ENCODE measurements at regions of chr19 and their contacts with region 1.

Region 1: DNA sequence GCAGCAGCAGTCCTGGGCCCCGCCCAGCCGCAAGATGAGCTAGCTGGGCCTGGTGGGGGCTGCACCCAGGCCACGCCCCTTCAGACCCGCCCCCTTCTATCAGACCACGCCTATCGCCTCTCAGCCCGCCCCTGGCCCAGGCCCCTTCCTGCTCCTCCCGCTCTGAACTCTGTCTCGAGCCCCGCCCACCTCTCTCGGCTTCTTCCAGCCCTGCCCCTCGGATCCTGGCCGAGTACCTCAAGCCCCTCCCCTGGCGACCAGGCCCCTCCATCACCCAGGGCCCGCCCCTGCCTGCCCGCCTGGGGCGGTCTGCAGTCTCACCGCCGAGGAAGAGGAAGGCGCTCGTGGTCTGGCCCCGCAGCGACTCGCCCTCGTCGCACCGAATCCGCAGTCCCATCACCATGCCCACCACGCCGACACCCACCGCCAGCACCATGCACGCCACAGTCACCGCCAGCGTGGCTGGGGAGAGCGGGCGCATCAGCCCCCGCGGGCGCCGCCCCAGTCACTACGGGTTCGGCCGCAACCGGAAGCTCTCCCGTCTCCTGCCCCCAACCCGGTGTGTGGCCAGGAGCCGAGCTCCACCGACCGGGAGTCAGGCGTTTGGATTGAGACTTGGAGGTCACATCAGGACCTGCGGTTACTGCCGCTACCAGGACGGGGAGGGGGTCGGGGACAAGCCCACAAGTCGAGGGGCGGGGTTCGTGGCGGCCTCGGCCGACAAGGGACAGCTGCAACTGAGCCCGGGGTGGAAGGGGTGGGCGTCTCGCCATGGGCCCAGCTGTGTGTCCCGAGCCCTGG is 1.0 kb downstream of the CLDND2 start:
- DNase-seq: peak; percentile 98
- ATAC-seq: peak; percentile 85
- H3K4me3 ChIP-seq: peak overlapping the region; percentile 73 to 94 (median 78)
- H3K4me3 Mint-ChIP-seq: peak overlapping the region; percentile 97
- H3K27ac ChIP-seq: peak overlapping the region; percentile 80 to 87
- H3K27ac Mint-ChIP-seq: peak overlapping the region; percentile 95
- H3K4me1 ChIP-seq: peaks cover 5 to 36% of the 10 kb centered on the region in 2 donors
- H3K4me1 Mint-ChIP-seq: peaks cover 37% of the 10 kb centered on the region
- H3K27me3 ChIP-seq: no peaks in the 10 kb centered on the region
- H3K27me3 Mint-ChIP-seq: no peaks in the 10 kb centered on the region
- CTCF ChIP-seq: no peak

Region 2: GRCh38 chr19:51325161-51325976 is 42.4 kb before region 1 on chr19:
- CTCF ChIA-PET with region 1: no interaction called
- POLR2A ChIA-PET with region 1: no interaction called
- intact Hi-C with region 1: no loop called
- DNase-seq: no peak
- ATAC-seq: no peak
- H3K4me3 ChIP-seq: no peak overlapping the region
- H3K4me3 Mint-ChIP-seq: no peak overlapping the region
- H3K27ac ChIP-seq: no peak overlapping the region
- H3K27ac Mint-ChIP-seq: no peak overlapping the region
- H3K4me1 ChIP-seq: peaks cover 12 to 20% of the 10 kb centered on the region in 2 donors
- H3K4me1 Mint-ChIP-seq: peaks cover 11% of the 10 kb centered on the region
- H3K27me3 ChIP-seq: peaks cover 0 to 51% (median 27%) of the 10 kb centered on the region in 4 experiments
- H3K27me3 Mint-ChIP-seq: peaks cover 67% of the 10 kb centered on the region
- CTCF ChIP-seq: no peak

Region 3: DNA sequence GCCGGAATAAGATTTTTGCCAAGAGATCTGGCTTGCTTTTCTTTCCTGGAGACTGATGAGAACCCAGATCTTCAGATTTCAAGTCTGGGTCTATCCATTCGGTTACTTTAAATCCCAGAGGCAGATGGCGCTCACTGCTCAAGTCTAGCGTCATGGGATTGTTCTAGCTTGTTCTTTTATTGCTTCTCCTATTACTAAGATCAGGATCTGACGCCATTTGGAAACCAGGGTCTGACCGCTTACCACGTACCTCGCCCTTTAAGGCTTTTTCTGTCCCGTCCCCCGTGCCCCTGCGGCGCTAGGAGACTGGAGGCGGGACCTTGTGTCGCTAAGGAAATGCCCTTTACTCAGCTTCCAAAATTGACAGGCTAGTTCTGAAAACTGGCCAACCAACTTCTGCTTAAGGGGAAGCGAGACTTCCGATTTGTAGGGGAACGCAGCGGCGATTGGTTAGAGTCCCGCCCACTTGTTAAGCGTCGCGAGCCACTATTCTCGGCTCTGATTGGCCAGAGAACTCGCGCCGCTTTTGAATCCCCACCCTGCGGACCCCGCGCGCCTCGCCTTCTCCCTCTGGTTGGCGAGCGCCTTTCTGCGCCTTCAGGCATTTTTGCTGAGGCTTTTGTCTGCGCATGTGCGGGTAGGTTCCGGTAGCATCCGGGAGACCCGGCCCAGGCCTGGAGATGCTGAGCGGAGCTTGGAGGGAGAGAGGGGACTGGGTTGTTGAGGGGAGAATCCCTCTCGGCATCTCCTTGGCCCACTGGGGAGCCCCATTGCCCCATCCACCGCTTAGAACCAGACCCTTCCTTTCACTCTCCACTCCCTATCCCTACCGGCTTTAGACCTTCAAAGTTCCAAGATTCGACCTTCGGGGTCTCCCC is 26.4 kb after region 1 on chr19:
- CTCF ChIA-PET with region 1: interaction called, 5 read pairs
- POLR2A ChIA-PET with region 1: interaction called, 8 read pairs
- intact Hi-C with region 1: loop called (anchors 1 kb)
- DNase-seq: peak; percentile 95
- ATAC-seq: peak; percentile 92
- H3K4me3 ChIP-seq: peak overlapping the region; percentile 43 to 74 (median 62)
- H3K4me3 Mint-ChIP-seq: peak overlapping the region; percentile 85
- H3K27ac ChIP-seq: peak overlapping the region; percentile 63 to 73
- H3K27ac Mint-ChIP-seq: peak overlapping the region; percentile 78
- H3K4me1 ChIP-seq: peaks cover 22 to 33% of the 10 kb centered on the region in 2 donors
- H3K4me1 Mint-ChIP-seq: peaks cover 30% of the 10 kb centered on the region
- H3K27me3 ChIP-seq: peaks cover 0 to 4% (median 0%) of the 10 kb centered on the region in 4 experiments
- H3K27me3 Mint-ChIP-seq: no peaks in the 10 kb centered on the region
- CTCF ChIP-seq: peak; percentile 13

Region 4: GRCh38 chr19:51441410-51442390 is 73.9 kb after region 1 on chr19:
- CTCF ChIA-PET with region 1: interaction called, 7 read pairs
- POLR2A ChIA-PET with region 1: no interaction called
- intact Hi-C with region 1: loop called (anchors 1 kb)
- DNase-seq: peak; percentile 88
- ATAC-seq: peak; percentile 89
- H3K4me3 ChIP-seq: peak overlapping the region; percentile 5 to 41 (median 37)
- H3K4me3 Mint-ChIP-seq: peak overlapping the region; percentile 71
- H3K27ac ChIP-seq: peak overlapping the region; percentile 61 to 71
- H3K27ac Mint-ChIP-seq: peak overlapping the region; percentile 83
- H3K4me1 ChIP-seq: peaks cover 20 to 32% of the 10 kb centered on the region in 2 donors
- H3K4me1 Mint-ChIP-seq: peaks cover 32% of the 10 kb centered on the region
- H3K27me3 ChIP-seq: peaks cover 0 to 15% (median 3%) of the 10 kb centered on the region in 4 experiments
- H3K27me3 Mint-ChIP-seq: peaks cover 20% of the 10 kb centered on the region
- CTCF ChIP-seq: peak; percentile 22

Region 5: GRCh38 chr19:51703575-51704515 is 336.1 kb after region 1 on chr19:
- CTCF ChIA-PET with region 1: no interaction called
- POLR2A ChIA-PET with region 1: no interaction called
- intact Hi-C with region 1: loop called (anchors 1 kb)
- DNase-seq: peak; percentile 98
- ATAC-seq: peak; percentile 92
- H3K4me3 ChIP-seq: peak overlapping the region; percentile 51 to 74 (median 68)
- H3K4me3 Mint-ChIP-seq: peak overlapping the region; percentile 91
- H3K27ac ChIP-seq: peak overlapping the region; percentile 64 to 84
- H3K27ac Mint-ChIP-seq: peak overlapping the region; percentile 90
- H3K4me1 ChIP-seq: peaks cover 22 to 31% of the 10 kb centered on the region in 2 donors
- H3K4me1 Mint-ChIP-seq: peaks cover 36% of the 10 kb centered on the region
- H3K27me3 ChIP-seq: peaks cover 0 to 30% (median 8%) of the 10 kb centered on the region in 4 experiments
- H3K27me3 Mint-ChIP-seq: peaks cover 23% of the 10 kb centered on the region
- CTCF ChIP-seq: peak; percentile 60

Measured in B cell (primary cell).